ENCODE measurements at regions of chr12 and their contacts with region 1.

Region 1: DNA sequence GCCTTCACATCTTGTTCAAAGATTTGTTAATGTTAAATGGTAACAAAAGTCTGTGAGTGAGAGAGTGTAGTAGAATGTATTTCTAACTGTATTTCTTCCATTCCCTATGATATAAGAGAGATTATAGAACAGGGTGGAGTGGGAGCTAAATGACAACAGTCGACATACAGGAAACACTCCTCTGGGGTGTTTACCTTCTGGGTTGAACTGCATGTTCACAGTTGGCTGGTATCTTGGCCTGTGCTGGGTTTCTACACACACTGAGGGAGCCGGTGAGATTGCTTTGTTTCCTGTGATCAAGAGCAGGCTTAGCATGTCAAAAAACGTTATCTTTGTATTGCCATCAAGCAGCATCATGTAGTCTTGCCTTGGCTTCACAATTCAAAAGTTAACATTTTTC is 274.3 kb upstream of the FAR2 start:
- DNase-seq: no peak
- ATAC-seq: no peak

Region 2: DNA sequence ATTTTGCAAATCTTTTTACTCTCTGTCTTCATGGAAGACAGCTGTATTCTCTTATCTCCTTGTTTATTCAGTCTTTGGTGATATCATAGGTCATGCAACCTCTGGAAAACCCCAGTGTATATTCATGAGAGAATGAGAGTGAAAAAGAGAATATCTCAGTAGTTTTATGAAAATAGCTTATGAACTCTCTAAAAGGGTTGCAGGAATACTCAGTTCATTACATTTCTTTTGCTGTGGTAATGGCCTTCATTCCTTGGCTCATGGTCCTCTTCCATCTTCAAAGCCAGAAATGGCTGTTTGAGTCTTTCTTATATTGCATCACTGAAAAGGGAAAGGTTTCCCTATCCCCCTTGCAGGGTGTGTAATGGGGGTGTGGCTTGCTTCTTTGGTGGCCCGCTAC is 534.5 kb before region 1 on chr12:
- intact Hi-C with region 1: no loop called
- DNase-seq: no peak
- ATAC-seq: no peak

Region 3: GRCh38 chr12:28811457-28811856 is 63.3 kb before region 1 on chr12:
- intact Hi-C with region 1: loop called (anchors 2 kb)
- DNase-seq: no peak
- ATAC-seq: no peak

Region 4: GRCh38 chr12:29171421-29172258 is 296.9 kb after region 1 on chr12:
- intact Hi-C with region 1: no loop called
- DNase-seq: no peak
- ATAC-seq: no peak

Region 5: GRCh38 chr12:29844667-29845066 is 969.9 kb after region 1 on chr12:
- intact Hi-C with region 1: no loop called
- DNase-seq: no peak
- ATAC-seq: no peak